AG04450 (cell line): ENCODE measurements at regions of chr2 and their contacts with region 1.

Region 1: GRCh38 chr2:9984217-9984739 is 32.8 kb downstream of the GRHL1 start:
- DNase-seq: no peak
- H3K4me3 ChIP-seq: no peak overlapping the region
- H3K27ac ChIP-seq: no peak overlapping the region
- H3K27me3 ChIP-seq: no peaks in the 10 kb centered on the region
- CTCF ChIP-seq: peak; percentile 65

Region 2: DNA sequence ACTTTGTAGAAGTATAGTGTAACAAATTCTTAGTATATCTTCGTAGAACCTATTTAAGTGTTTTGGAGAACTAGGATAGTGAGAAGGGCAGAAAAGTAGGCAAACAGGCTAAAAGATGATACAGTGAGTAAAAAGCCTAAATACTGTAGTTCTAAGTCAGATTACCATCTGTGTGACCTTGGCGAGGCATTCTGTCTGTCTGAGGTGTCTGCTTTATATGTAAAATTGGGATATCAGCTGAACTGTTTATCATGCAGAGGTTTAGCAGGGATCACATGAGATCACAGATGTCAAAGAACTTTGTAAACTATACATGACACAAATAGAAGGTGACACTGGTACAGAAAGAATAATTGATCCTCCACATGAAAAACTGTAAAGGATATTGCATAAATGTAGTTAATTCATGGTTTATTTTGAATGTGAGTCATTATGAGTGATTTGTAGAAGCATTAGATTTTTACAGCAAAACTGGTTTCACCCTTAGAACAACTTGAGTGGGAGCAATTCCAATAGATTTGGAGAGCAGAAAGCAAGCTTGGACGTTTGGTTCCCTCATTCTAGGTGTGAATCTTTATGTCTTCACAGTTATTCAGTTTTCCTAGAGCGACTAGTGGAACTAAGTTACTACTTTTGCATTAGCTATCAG is 99.1 kb before region 1 on chr2:
- CTCF ChIA-PET with region 1: interaction called, 13 read pairs
- POLR2A ChIA-PET with region 1: no interaction called
- DNase-seq: no peak
- H3K4me3 ChIP-seq: no peak overlapping the region
- H3K27ac ChIP-seq: no peak overlapping the region
- H3K27me3 ChIP-seq: no peaks in the 10 kb centered on the region
- CTCF ChIP-seq: no peak

Region 3: DNA sequence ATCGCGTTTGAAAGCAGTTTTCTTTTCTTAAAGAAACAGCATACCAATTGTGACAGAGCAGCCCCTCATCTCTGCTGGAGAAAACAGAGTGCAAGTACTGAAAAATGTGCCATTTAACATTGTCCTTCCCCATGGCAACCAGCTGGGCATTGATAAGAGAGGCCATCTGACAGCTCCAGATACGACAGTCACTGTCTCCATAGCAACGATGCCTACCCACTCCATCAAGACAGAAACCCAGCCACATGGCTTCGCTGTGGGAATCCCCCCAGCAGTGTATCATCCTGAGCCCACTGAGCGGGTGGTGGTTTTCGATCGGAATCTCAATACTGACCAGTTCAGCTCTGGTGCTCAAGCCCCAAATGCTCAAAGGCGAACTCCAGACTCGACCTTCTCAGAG is 23.3 kb before region 1 on chr2:
- CTCF ChIA-PET with region 1: interaction called, 20 read pairs
- POLR2A ChIA-PET with region 1: no interaction called
- DNase-seq: no peak
- H3K4me3 ChIP-seq: no peak overlapping the region
- H3K27ac ChIP-seq: no peak overlapping the region
- H3K27me3 ChIP-seq: no peaks in the 10 kb centered on the region
- CTCF ChIP-seq: no peak

Region 4: GRCh38 chr2:10006236-10007161 is 22.2 kb after region 1 on chr2:
- CTCF ChIA-PET with region 1: interaction called, 16 read pairs
- POLR2A ChIA-PET with region 1: no interaction called
- DNase-seq: no peak
- H3K4me3 ChIP-seq: no peak overlapping the region
- H3K27ac ChIP-seq: no peak overlapping the region
- H3K27me3 ChIP-seq: no peaks in the 10 kb centered on the region
- CTCF ChIP-seq: no peak

Region 5: DNA sequence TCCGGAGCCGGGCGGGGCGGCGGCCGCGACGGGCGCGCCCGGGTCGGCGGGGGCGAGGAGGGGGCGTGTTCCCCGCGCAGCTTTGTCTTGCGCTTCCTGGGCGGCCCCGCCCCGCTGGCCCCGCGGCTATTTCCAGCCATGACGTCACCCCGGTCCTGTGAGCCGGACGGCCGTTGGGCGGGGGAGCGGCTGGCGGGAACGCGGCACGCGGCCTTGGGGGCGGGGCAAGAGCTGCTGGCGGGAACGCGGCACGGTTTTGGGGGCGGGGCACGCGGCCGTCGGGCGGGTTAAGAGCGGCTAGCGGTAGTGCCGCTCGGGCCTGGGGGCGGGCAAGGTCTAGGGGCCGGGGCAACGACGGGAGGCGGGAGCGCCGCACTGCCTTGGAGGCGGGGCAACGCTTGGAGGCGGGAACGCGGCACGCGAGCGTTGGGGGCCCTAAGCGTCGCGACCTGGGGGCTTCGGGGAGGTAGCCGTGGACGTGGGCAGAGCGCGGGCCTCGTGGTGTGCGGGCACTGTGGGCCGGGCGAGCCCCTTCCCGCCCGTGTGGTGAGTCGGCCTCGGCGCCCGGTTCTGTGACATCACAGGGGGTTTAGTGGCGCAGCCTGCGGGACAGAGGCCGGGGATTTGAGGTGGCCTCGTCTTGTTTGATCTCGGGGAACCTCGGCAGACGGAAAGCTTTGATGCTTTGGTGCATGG is 59.8 kb after region 1 on chr2:
- CTCF ChIA-PET with region 1: interaction called, 63 read pairs
- POLR2A ChIA-PET with region 1: interaction called, 4 read pairs
- DNase-seq: peak; percentile 66
- H3K4me3 ChIP-seq: peak overlapping the region; percentile 63
- H3K27ac ChIP-seq: no peak overlapping the region
- H3K27me3 ChIP-seq: peaks cover 5% of the 10 kb centered on the region
- CTCF ChIP-seq: no peak